ENCODE measurements at regions of chr15 and their contacts with region 1.

Region 1: GRCh38 chr15:71800835-71801745 is 9.3 kb upstream of the NR2E3 start:
- DNase-seq: peak; percentile 91 to 96
- ATAC-seq: peak; percentile 91 to 97
- H3K4me3 ChIP-seq: no peak overlapping the region
- H3K27ac ChIP-seq: peak overlapping the region; percentile 84
- H3K4me1 ChIP-seq: peaks cover 45% of the 10 kb centered on the region
- CTCF ChIP-seq: peak; percentile 98
- EP300 ChIP-seq: peak; percentile 95 to 97
- POLR2A ChIP-seq: no peak
- RAD21 ChIP-seq: peak; percentile 99

Region 2: DNA sequence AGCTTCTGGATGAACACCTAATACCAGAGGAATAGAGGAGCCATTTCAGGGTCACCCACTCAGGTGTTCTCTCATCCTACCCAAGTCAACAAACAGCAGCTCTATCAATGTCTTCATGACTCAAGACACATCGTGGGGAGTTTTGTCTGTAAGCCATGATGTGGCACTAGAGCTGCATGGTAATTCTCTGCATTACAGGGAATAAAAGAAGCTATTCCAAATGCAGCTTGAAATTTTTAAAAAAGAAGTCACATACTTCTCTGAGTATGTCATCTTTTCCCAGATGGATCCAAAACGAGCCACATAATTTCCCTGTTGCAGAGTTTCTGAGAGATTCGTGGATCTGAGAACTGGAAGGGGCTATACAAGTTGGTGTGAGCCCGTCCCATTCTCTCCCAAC is 692.0 kb before region 1 on chr15:
- CTCF ChIA-PET with region 1: interaction called, 12 read pairs
- POLR2A ChIA-PET with region 1: no interaction called
- DNase-seq: no peak
- ATAC-seq: peak in 1 of 2 experiments; percentile 35; a peak in 2 of 6 replicates
- H3K4me3 ChIP-seq: no peak overlapping the region
- H3K27ac ChIP-seq: peak overlapping the region; percentile 0 to 9; a peak in 1 of 6 replicates
- H3K4me1 ChIP-seq: peaks cover 23% of the 10 kb centered on the region
- CTCF ChIP-seq: no peak
- EP300 ChIP-seq: no peak
- POLR2A ChIP-seq: no peak
- RAD21 ChIP-seq: peak; percentile 36 to 49; a peak in 4 of 5 replicates

Region 3: DNA sequence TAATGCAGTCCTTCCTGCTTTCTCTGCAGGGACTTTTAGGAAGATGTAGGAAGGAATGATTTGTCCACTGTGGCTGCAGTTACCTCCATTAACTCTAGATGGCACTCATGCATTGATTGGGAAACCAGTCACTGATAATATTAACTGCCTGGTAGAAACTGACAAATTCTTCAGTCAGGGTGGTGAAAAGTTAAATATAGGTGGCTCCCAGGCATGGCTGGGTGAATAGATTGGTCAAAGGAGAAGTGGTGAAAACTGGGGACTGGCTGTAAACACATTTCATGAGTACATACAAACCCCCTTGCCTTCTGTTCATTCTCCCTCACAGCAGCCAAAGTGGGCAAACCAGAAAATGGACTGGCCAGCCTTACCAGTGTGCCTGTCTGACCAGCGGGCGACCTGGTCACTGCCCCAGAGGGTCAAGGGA is 352.4 kb before region 1 on chr15:
- CTCF ChIA-PET with region 1: interaction called, 35 read pairs
- POLR2A ChIA-PET with region 1: interaction called, 3 read pairs
- DNase-seq: peak; percentile 55 to 86
- ATAC-seq: peak; percentile 36 to 47; a peak in 3 of 6 replicates
- H3K4me3 ChIP-seq: no peak overlapping the region
- H3K27ac ChIP-seq: peak overlapping the region; percentile 85
- H3K4me1 ChIP-seq: peaks cover 67% of the 10 kb centered on the region
- CTCF ChIP-seq: peak; percentile 98
- EP300 ChIP-seq: no peak
- POLR2A ChIP-seq: no peak
- RAD21 ChIP-seq: peak; percentile 96 to 97

Region 4: DNA sequence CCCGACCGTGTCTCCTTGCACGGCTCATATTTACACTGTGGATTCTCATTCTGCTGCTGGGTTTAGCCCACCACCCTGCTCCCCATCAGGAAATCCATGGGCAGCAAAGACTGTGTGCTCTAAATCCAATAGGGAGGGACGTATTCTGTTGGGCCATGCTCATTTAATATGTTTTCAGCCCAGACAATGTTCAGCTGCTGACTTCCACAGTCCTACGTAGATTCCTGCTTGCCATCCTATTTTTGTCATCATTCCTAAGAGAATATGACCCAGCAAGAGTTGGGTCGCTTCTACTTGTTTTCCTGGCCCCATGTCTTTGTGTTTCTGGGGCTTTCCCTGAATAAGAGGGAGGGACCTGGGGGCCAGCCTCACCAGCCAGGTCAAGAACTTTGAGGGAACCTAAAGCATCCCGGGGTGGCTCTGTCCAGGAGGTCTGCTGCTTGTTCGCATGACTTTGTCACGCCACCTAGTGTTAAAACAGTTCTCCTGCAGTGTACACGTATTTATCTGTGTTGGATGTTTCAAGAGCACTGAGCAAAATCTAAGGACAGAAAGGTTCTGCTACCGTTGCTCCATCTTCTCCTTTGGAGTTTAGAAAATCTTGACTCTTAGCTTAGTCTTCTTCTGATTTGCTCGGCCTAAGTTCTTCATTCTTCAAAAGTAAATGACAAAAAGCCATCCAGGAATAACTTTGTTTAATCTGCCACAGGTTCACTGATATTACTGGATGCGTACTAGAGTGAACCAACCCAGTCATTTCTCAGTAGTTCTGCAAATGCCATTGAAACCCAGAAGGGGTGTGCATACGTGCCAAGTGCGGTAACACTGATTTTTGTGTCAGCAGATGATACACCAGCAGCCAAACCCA is 70.6 kb before region 1 on chr15:
- CTCF ChIA-PET with region 1: interaction called, 17 read pairs
- POLR2A ChIA-PET with region 1: no interaction called
- DNase-seq: peak; percentile 85 to 88
- ATAC-seq: peak; percentile 88 to 98
- H3K4me3 ChIP-seq: no peak overlapping the region
- H3K27ac ChIP-seq: no peak overlapping the region
- H3K4me1 ChIP-seq: peaks cover 4% of the 10 kb centered on the region; the same call in 2 of the 3 replicates
- CTCF ChIP-seq: peak; percentile 91
- EP300 ChIP-seq: no peak
- POLR2A ChIP-seq: no peak
- RAD21 ChIP-seq: peak; percentile 80 to 81

Region 5: DNA sequence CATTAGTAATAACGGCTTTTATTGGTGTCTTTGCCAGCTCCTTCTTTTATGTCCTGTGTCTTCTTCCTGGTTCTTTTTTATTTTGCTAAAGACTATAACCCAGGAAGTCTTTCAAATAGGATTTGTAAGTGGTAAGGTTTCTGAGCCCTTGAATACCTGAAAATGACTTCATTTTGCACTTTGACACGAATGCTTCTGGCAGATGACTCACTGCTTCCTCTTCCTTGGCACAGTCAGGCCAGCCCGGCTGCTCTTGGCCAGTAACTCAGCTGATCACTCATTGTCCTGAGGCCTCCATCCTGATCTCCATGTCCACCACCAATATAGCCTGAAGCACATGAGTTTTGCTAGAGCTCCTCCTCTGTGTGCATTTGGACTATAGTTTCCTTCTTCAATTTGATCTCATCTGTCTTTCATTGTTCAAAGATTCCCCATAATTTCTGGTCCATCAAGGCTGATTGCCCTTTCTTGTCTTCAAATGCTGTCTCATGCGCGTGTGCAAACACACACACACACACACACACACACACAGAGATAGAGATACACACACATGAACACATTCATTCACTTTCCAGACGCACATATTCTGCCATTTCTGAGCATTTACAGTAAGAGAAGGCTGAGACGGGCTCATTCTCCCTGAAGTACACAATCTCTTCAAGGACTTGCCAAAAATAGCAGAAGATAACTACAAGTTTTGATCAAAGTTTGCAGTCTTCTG is 39.3 kb before region 1 on chr15:
- CTCF ChIA-PET with region 1: interaction called, 522 read pairs
- POLR2A ChIA-PET with region 1: no interaction called
- DNase-seq: peak; percentile 62 to 83
- ATAC-seq: peak; percentile 73 to 87
- H3K4me3 ChIP-seq: no peak overlapping the region
- H3K27ac ChIP-seq: peak overlapping the region; percentile 12 to 40; a peak in 5 of 6 replicates
- H3K4me1 ChIP-seq: peaks cover 9% of the 10 kb centered on the region
- CTCF ChIP-seq: 0 out of 3 replicates have a peak, but pooled peaks have one; percentile 3
- EP300 ChIP-seq: no peak
- POLR2A ChIP-seq: no peak
- RAD21 ChIP-seq: no peak

Region 6: DNA sequence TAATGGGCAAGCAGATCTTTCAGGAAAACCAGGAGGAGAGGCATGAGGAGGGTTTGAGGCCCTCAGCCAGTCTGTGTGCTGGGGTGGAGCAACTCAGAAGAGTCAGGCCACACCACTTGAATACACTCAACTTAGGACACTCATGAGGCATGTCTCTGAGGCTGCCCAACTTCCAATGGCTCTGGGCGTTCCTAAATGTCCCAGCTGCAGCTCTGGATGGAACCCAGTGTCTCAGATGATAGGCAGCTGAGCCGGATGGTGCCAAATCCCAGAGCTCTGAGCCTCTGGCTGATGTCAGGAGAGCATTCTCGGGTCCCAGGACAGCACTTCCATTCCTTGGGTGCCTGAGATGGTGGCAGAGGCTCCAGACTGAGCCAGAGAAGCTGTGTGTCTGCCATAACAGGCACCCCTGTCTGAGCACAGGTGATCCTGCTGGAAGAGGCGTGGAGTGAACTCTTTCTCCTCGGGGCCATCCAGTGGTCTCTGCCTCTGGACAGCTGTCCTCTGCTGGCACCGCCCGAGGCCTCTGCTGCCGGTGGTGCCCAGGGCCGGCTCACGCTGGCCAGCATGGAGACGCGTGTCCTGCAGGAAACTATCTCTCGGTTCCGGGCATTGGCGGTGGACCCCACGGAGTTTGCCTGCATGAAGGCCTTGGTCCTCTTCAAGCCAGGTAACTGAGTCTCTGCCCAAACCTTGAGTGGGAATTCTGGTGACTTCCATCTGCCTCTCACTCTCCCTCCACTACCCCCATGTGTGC is 12.1 kb after region 1 on chr15:
- CTCF ChIA-PET with region 1: interaction called, 16 read pairs
- POLR2A ChIA-PET with region 1: no interaction called
- DNase-seq: no peak
- ATAC-seq: no peak
- H3K4me3 ChIP-seq: no peak overlapping the region
- H3K27ac ChIP-seq: no peak overlapping the region
- H3K4me1 ChIP-seq: 0 out of 3 replicates have a peak, but pooled peaks cover under 1% of the 10 kb centered on the region
- CTCF ChIP-seq: no peak
- EP300 ChIP-seq: no peak
- POLR2A ChIP-seq: no peak
- RAD21 ChIP-seq: no peak

Region 7: DNA sequence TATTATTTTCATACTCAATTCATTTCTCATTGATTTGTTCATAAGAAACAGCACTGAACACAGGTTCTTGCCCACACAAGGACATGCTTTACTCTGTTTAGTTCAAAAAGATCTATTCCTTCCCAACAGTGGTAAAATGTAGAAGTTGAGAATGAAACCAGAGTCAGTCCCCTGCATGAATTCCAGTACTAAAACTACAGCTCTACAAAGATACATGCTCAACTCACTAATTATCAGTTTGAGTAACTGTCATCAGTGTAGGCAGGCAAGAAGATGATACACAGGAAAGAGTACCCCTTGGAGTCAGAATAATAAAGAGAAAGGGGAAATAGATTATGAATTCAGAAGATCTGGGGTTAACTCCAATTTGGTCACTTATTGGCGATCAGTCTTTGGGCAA is 52.5 kb after region 1 on chr15:
- CTCF ChIA-PET with region 1: interaction called, 22 read pairs
- POLR2A ChIA-PET with region 1: no interaction called
- DNase-seq: no peak
- ATAC-seq: no peak
- H3K4me3 ChIP-seq: no peak overlapping the region
- H3K27ac ChIP-seq: no peak overlapping the region
- H3K4me1 ChIP-seq: no peaks in the 10 kb centered on the region
- CTCF ChIP-seq: no peak
- EP300 ChIP-seq: no peak
- POLR2A ChIP-seq: no peak
- RAD21 ChIP-seq: no peak

Measured in A549 (cell line).